Cardiac septum (tissue), 1 donor: ENCODE measurements at regions of chrX and their contacts with region 1.

Region 1: DNA sequence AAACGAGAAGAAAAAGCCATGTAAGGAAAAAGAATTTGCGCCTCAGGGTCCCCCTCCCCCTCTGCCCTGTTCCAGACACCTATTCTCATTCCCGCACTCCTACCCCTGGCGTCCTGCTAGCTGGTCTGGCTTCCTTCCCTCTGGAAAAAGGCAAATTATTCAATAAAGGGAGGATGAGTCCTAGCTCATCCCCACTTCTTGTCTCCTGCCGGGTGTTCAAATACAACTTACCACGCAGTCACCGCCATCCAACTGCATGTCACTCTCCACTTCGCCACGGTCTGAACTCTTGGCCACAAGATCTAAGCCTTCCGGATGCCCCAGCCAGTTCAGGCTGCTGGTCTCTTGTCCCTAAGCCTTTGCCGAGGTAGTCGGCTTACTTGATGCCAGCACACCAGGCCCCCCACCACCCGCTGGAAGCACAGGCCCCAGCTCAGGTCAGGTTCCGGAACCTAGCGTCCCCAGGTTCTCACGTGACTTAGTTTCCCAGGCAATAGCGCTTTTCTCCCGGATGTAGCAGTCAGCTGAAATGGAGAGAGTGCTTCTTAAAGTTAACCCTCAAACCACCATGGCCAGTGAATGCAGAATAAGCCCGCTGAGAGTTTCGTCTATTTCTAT is 209.6 kb upstream of the SPIN4 start:
- DNase-seq: peak; percentile 76

Region 2: GRCh38 chrX:63657821-63658220 is 97.1 kb after region 1 on chrX:
- intact Hi-C with region 1: loop called (anchors 10 kb)
- DNase-seq: peak; percentile 81